HepG2 (cell line): ENCODE measurements at regions of chr2 and their contacts with region 1.

Region 1: DNA sequence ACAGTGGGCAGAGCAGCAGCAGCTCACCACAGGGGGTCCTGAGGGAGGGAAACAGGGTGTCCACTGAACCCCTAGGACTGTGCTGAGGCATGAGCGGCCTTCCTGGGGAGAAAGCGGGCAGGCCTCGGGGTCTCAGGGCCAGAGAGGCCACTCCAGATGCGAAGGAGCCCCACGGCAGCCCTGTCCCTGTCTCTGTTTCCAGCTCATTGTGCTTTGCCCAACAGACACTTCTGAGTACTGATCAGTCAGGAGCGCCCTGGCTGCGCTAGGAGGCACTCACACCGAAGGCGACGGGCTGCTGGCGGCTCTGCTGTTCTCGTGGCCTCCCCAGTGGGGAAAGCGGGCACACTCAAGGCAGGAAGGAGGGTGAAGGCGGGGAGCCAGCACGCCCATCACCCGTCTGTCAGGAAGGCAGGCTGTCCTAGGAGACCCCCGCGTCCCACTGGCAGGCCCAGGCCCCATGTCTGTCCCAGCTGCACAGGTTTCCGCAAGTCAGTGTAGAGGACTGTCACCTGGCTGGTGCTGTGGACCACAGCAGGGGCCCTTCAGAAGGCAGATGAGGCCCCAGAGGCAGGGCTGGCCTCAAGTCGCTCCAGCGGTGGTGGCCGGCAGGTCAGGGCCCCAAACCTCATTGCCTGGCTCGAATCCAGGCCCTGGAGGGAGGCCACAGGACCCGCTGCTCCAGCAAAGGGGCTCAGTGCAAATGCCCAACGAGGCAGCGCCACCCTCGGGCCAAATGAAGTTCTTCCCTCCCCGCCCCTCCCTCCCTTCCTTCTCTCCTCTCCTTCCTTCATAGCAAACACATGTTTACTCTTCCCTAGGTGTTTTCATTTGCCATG is 6.8 kb downstream of the ESPNL start:
- DNase-seq: peak; percentile 52
- ATAC-seq: peak; percentile 40
- H3K4me3 ChIP-seq: peak overlapping the region; percentile 51 to 73 (median 53)
- H3K27ac ChIP-seq: no peak overlapping the region
- H3K4me1 ChIP-seq: peaks cover 56% of the 10 kb centered on the region
- H3K27me3 ChIP-seq: peaks cover 9 to 40% of the 10 kb centered on the region in 2 experiments
- CTCF ChIP-seq: peak; percentile 87
- EP300 ChIP-seq: no peak
- POLR2A ChIP-seq: no peak
- RAD21 ChIP-seq: peak; percentile 74; the same call in 1 of the 2 replicates

Region 2: DNA sequence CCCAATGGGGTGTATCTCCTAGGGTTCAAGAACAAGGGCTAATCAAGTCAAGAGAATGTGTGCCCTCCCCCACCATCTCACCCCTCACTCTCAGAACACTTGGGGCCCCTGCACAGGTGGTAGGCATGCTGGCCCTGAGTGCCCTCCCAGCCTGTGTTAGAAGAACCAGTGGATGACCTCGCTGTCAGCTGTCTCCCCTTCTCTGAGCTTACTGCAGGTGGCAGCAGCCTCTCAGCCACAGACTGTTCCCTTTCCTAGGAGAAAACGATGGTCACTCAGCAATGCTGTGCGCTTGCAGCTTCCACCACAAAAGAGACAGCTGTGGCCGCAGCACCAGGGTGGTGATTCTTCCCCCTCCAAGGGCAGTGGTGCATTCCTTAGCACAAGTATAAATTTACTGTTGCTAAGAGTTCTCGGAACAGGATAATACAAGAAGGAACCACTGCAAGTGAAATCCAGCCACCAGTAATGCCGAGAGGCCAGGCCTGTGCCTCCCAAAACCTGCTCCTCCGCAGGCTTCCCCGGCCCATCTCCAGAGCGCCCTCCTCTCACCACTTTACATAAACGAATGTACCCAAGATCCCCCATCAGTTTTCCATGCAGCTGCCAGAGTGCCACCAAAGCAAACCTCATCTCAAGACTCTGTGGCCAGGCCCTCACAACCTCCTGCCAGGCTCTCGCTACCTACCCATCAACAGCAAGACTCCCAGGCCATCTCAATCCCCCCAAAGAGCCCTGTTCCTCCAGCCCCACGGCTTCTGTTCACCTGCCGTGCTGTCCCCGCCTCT is 248.4 kb before region 1 on chr2:
- CTCF ChIA-PET with region 1: interaction called, 5 read pairs
- POLR2A ChIA-PET with region 1: interaction called, 3 read pairs
- in situ Hi-C with region 1: loop called (anchors 5 kb)
- intact Hi-C with region 1: loop called (anchors 1 kb)
- DNase-seq: peak; percentile 78
- ATAC-seq: peak; percentile 92
- H3K4me3 ChIP-seq: peak overlapping the region in 1 of 3 experiments; percentile 61; a peak in 1 of 6 replicates
- H3K27ac ChIP-seq: no peak overlapping the region
- H3K4me1 ChIP-seq: peaks cover 29% of the 10 kb centered on the region
- H3K27me3 ChIP-seq: peaks cover 8 to 84% of the 10 kb centered on the region in 2 experiments; a peak in 4 of 5 replicates
- CTCF ChIP-seq: peak; percentile 97
- EP300 ChIP-seq: no peak
- POLR2A ChIP-seq: no peak
- RAD21 ChIP-seq: peak; percentile 96

Region 3: DNA sequence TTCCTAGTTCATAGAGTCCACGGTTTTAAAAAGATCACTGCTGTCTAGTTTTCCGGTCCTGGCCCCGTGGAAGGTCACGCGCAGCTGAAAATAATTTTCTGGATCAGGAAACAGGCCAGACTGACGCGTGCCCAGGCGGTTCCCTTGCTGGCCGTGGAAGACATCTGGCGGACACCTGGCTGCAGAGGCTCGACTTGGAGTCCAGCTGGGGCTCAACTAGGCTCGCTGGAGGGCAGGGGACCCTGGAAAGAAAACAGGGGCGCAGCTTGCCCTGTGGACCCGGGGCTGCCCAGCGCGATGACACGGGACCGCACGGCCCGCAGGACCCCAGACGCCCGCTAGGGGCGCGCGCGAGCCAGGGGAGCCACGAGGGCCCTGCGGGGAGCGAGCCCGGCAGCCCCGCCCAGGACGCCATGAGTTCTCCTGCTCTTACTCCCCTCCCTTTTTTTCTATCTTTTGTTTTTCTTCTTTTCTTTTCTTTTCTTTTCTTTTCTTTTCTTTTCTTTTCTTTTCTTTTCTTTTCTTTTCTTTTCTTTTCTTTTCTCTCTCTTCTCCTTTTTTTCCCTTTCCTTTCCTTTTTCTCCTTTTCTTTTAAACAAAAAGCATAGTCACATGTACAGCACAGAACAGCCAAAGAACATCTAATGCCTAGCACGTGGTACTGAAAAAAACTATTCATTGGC is 183.3 kb before region 1 on chr2:
- CTCF ChIA-PET with region 1: interaction called, 5 read pairs
- POLR2A ChIA-PET with region 1: no interaction called
- in situ Hi-C with region 1: no loop called
- intact Hi-C with region 1: loop called (anchors 1 kb)
- DNase-seq: peak; percentile 47
- ATAC-seq: peak; percentile 98
- H3K4me3 ChIP-seq: peak overlapping the region in 1 of 3 experiments; percentile 58; a peak in 2 of 6 replicates
- H3K27ac ChIP-seq: no peak overlapping the region
- H3K4me1 ChIP-seq: peaks cover 8% of the 10 kb centered on the region
- H3K27me3 ChIP-seq: peaks cover 2 to 44% of the 10 kb centered on the region in 2 experiments; a peak in 4 of 5 replicates
- CTCF ChIP-seq: peak; percentile 89
- EP300 ChIP-seq: no peak
- POLR2A ChIP-seq: no peak
- RAD21 ChIP-seq: peak; percentile 95

Region 4: DNA sequence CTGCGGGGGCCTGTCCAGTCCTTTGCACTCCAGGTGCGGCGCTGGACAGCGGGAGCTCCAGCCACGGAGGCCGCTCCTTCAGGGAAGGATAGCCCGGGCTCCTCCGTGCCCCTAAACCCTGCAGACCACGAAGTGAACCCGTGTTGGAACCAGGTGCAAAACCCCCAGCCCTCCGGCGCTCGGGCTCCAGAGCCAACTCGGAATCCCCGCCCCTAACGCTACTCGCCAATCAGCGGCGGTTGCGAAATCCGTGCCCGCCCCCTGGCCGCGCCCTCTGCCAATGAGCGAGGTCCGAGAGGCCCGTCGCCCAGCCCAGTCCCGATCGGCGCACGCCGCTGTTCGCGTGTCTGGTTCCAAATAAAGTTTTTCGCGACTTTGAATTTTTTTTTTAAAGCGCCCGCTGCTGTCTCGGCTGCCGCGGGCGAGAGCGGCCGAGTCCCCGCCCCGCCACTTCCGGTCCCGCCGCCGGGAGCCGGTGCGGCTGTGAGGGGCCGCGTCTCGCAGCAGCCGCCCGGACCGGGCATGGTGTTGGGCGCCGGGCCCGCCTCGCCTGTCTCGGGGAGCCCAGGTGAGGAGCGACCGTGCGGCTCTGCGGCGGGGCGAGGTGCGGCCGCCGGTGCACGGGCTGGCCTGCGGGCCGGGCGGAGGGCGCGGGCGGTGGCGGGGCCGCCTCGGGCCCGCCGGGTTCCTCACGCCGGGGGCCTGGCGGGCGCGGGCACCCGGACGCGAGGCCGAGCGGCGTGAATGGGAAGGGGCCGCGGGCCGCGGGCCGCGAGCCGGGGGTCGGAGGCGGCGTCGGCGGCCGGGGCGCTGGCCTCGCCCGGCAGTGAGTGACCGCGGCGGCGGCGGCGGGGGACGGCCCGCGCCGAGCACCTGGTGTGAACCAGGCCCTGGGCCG is 140.1 kb before region 1 on chr2 and contains the start of gene UBE2F:
- CTCF ChIA-PET with region 1: no interaction called
- POLR2A ChIA-PET with region 1: no interaction called
- in situ Hi-C with region 1: no loop called
- intact Hi-C with region 1: loop called (anchors 5 kb)
- DNase-seq: peak; percentile 95
- ATAC-seq: peak; percentile 93
- H3K4me3 ChIP-seq: peak within 1 kb of the TSS; percentile 89 to 99 (median 92)
- H3K27ac ChIP-seq: peak within 1 kb of the TSS; percentile 45
- H3K4me1 ChIP-seq: peaks cover 43% of the 10 kb centered on the region
- H3K27me3 ChIP-seq: peaks cover 0 to 16% of the 10 kb centered on the region in 2 experiments; a peak in 3 of 5 replicates
- CTCF ChIP-seq: no peak
- EP300 ChIP-seq: peak; percentile 72 to 89
- POLR2A ChIP-seq: peak; percentile 49 to 85; a peak in 3 of 4 replicates
- RAD21 ChIP-seq: peak; percentile 45
- total RNA-seq, gene UBE2F: 73.1 and 79.8 TPM in 2 replicates

Region 5: GRCh38 chr2:237980751-237981150 is 126.2 kb before region 1 on chr2:
- CTCF ChIA-PET with region 1: no interaction called
- POLR2A ChIA-PET with region 1: no interaction called
- in situ Hi-C with region 1: no loop called
- intact Hi-C with region 1: no loop called
- DNase-seq: no peak
- ATAC-seq: no peak
- H3K4me3 ChIP-seq: no peak overlapping the region
- H3K27ac ChIP-seq: no peak overlapping the region
- H3K4me1 ChIP-seq: no peaks in the 10 kb centered on the region
- H3K27me3 ChIP-seq: no peaks in the 10 kb centered on the region
- CTCF ChIP-seq: no peak
- EP300 ChIP-seq: no peak
- POLR2A ChIP-seq: no peak
- RAD21 ChIP-seq: no peak

Region 6: GRCh38 chr2:237998530-237998929 is 108.4 kb before region 1 on chr2:
- CTCF ChIA-PET with region 1: no interaction called
- POLR2A ChIA-PET with region 1: no interaction called
- in situ Hi-C with region 1: no loop called
- intact Hi-C with region 1: no loop called
- DNase-seq: peak; percentile 62
- ATAC-seq: no peak
- H3K4me3 ChIP-seq: no peak overlapping the region
- H3K27ac ChIP-seq: no peak overlapping the region
- H3K4me1 ChIP-seq: no peaks in the 10 kb centered on the region
- H3K27me3 ChIP-seq: no peaks in the 10 kb centered on the region
- CTCF ChIP-seq: no peak
- EP300 ChIP-seq: no peak
- POLR2A ChIP-seq: no peak
- RAD21 ChIP-seq: no peak